ENCODE measurements at regions of chr1 and their contacts with region 1.

Region 1: DNA sequence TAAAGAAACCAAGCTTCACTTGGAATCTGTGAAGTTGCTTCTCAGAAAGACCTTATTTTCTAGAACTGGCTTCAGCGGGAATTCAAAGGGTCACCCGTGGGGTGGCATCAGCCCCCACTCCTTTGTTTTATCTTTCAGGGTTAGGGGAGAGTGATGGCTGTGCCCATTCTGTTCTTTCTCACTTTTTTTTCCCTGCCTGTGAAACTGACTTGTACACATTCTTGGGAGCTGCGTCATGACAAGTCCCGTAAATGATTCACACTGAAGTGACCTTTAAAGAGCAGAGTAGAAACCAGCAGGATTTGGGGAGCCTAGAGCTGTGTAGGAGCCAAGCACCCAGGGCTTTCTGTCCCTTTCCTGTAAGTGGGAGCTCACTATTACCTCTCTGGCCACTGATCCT is 43.8 kb downstream of the SLC44A3 start:
- DNase-seq: peak; percentile 64
- H3K4me3 Mint-ChIP-seq: peak overlapping the region; percentile 45
- H3K27ac Mint-ChIP-seq: peak overlapping the region; percentile 88
- H3K4me1 Mint-ChIP-seq: peaks cover 50% of the 10 kb centered on the region
- H3K27me3 Mint-ChIP-seq: no peaks in the 10 kb centered on the region
- CTCF ChIP-seq: no peak

Region 2: DNA sequence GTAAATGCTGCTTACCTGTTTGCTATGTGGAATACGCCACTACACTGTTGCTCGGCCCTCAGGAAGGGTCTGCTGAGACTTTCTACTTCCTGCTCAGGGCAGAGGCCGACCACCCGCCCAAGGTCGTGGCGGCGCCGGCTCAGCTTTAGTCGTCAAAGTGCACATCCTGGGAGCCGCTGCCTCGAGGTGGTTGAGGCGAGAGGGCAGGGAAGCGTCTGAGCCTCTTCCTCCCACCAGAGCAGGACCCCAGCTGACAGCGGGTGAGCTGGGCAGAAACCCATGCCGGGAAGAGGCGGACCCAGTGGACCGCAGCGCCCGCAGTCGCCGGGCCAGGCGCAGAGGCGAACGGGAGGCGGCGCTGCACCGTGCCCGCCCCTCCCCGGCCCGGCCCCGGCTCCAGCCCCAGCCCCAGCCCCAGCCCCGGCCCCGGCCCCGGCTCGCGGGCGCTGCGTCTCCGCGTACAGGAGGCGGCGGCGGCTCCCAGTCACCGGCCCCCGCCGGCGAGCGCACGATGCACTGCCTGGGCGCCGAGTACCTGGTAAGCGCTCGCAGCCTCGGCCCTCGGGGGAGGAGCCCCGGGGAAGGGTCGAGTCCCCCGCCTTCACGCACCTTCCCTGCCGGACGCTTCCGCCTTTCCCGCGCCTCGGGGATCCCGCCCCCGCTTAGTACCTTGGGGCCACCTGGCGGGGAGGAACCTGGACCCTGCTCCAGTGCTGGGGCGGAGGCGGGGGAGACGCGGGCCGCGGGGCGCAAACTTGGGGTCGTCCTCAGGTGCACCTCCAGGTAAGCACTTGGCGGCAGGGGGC is 43.8 kb before region 1 on chr1 and contains the start of gene SLC44A3:
- CTCF ChIA-PET with region 1: no interaction called
- intact Hi-C with region 1: no loop called
- DNase-seq: peak; percentile 75
- H3K4me3 Mint-ChIP-seq: peak within 1 kb of the TSS; percentile 88
- H3K27ac Mint-ChIP-seq: peak within 1 kb of the TSS; percentile 82
- H3K4me1 Mint-ChIP-seq: peaks cover 37% of the 10 kb centered on the region
- H3K27me3 Mint-ChIP-seq: no peaks in the 10 kb centered on the region
- CTCF ChIP-seq: no peak
- total RNA-seq, gene SLC44A3: 32.0 and 34.5 TPM in 2 replicates

Region 3: DNA sequence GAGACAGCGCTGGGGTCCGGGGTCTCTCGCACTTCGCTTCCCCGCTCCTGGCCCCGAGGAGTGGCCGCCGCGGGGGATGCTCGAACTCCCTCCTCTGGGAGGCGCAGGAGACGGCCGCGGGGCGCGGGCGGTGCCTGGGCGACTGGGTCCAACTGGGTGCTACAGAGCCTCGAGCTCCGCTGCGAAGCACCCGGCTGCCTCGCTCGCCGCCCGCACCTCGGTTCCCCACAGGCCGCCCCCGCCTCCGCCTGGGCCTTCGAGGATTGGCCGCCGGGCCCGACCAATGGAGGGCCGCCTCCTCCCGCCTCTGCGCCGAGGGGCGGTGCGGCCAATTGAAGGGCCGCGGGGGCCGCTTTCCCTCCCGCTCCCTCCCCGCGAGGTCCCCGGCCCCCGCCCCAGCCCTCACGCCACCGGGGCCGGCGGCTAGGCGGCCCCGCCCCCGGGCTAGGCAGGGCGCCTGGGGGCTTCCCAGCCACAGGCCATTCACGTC is 63.0 kb after region 1 on chr1 and contains the start of gene CNN3:
- CTCF ChIA-PET with region 1: no interaction called
- intact Hi-C with region 1: loop called (anchors 5 kb)
- DNase-seq: peak; percentile 95
- H3K4me3 Mint-ChIP-seq: peak within 1 kb of the TSS; percentile 98
- H3K27ac Mint-ChIP-seq: peak within 1 kb of the TSS; percentile 86
- H3K4me1 Mint-ChIP-seq: peaks cover 51% of the 10 kb centered on the region
- H3K27me3 Mint-ChIP-seq: no peaks in the 10 kb centered on the region
- CTCF ChIP-seq: no peak
- total RNA-seq, gene CNN3: 83.4 and 140 TPM in 2 replicates

Region 4: DNA sequence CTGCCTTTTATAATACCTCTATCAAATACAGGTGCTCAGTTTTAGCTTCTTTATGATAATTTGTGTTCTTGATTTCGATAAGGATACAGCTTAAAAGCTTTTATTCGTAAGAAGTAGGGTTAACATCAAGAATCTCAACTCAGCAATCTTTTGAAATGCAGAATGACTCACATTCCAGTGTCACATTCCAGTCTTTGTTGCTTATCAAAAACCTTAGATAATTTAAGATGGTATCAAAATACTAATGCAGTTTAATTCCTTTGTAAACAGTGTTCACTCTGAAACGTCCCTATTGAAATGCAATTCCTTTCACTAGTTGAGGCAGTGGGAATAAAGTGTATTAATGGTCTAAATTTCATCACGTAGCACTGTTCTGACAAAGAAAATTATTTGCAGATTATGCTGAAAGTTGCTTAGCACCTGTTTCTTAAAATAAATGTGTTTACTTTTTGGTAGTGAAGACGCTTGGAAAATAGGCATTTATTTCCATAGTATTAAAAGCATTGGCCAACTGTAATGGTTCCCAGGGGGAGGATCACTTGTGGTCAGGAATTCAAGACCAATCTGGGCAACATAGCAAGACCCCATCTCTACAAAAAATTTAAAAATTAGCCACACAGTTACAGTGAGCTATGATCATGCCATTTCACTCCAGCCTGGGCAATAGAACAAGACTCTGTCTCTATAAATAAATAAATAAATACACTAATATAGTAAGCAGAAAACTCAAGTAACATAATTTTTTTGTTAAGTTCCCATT is 73.1 kb after region 1 on chr1:
- CTCF ChIA-PET with region 1: no interaction called
- intact Hi-C with region 1: no loop called
- DNase-seq: no peak
- H3K4me3 Mint-ChIP-seq: no peak overlapping the region
- H3K27ac Mint-ChIP-seq: no peak overlapping the region
- H3K4me1 Mint-ChIP-seq: peaks cover 33% of the 10 kb centered on the region
- H3K27me3 Mint-ChIP-seq: no peaks in the 10 kb centered on the region
- CTCF ChIP-seq: no peak

Measured in Calu3 (cell line).